AG04450 (cell line): ENCODE measurements at regions of chr20 and their contacts with region 1.

Region 1: GRCh38 chr20:62065669-62066338 is at the start of gene TAF4:
- DNase-seq: peak; percentile 33
- H3K4me3 ChIP-seq: peak within 1 kb of the TSS; percentile 65
- H3K27ac ChIP-seq: peak within 1 kb of the TSS; percentile 21
- H3K27me3 ChIP-seq: no peaks in the 10 kb centered on the region
- CTCF ChIP-seq: no peak
- polyA plus RNA-seq, gene TAF4: 2.6 and 2.7 TPM in 2 replicates

Region 2: GRCh38 chr20:62121776-62122631 is 56.2 kb after region 1 on chr20 and contains the start of gene LSM14B:
- CTCF ChIA-PET with region 1: no interaction called
- POLR2A ChIA-PET with region 1: interaction called, 27 read pairs
- DNase-seq: peak; percentile 87
- H3K4me3 ChIP-seq: peak within 1 kb of the TSS; percentile 82
- H3K27ac ChIP-seq: peak within 1 kb of the TSS; percentile 89
- H3K27me3 ChIP-seq: peaks cover 17% of the 10 kb centered on the region
- CTCF ChIP-seq: no peak
- polyA plus RNA-seq, gene LSM14B: 26.2 and 30.7 TPM in 2 replicates